AG04449 (cell line): ENCODE measurements at regions of chr17 and their contacts with region 1.

Region 1: GRCh38 chr17:37818689-37819088 is 73.8 kb upstream of the HNF1B start:
- DNase-seq: no peak
- H3K4me3 ChIP-seq: no peak overlapping the region
- CTCF ChIP-seq: no peak

Region 2: DNA sequence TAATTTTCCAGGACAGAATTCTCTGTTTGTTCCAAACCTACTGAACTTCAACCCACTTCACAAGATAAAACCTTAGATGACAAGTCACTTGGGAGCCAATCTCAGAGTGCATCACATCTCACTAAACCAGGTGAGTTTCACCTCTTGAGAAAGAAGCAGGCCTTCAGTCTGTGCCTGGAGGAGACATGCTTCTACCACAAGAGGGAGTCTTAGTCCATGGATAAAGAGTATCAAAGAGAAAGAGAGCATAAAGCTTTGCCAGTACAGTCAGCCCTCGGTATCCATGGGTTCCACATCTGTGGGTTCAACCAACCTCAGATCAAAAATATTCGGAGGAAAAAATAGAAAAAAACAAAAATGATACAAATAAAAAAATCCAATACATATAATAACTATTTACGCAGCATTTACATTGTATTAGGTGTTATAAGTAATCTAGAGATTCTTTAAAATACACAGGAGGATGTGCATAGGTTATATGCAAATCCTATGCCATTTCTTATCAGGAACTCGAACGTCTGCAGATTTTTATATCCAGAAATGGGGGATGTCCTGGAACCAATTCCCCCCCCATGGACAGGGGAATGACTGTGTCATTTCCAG is 291.3 kb before region 1 on chr17:
- CTCF ChIA-PET with region 1: interaction called, 35 read pairs
- POLR2A ChIA-PET with region 1: no interaction called
- DNase-seq: no peak
- H3K4me3 ChIP-seq: no peak overlapping the region
- CTCF ChIP-seq: peak; percentile 67

Region 3: GRCh38 chr17:37643118-37643766 is 175.4 kb before region 1 on chr17 and contains the start of gene DDX52:
- CTCF ChIA-PET with region 1: interaction called, 169 read pairs
- POLR2A ChIA-PET with region 1: no interaction called
- DNase-seq: no peak
- H3K4me3 ChIP-seq: peak within 1 kb of the TSS; percentile 93
- CTCF ChIP-seq: no peak

Region 4: GRCh38 chr17:37661400-37662014 is 157.2 kb before region 1 on chr17:
- CTCF ChIA-PET with region 1: interaction called, 11 read pairs
- POLR2A ChIA-PET with region 1: no interaction called
- DNase-seq: no peak
- H3K4me3 ChIP-seq: no peak overlapping the region
- CTCF ChIP-seq: no peak

Region 5: GRCh38 chr17:37701496-37701898 is 117.2 kb before region 1 on chr17:
- CTCF ChIA-PET with region 1: interaction called, 31 read pairs
- POLR2A ChIA-PET with region 1: no interaction called
- DNase-seq: no peak
- H3K4me3 ChIP-seq: no peak overlapping the region
- CTCF ChIP-seq: peak; percentile 32

Region 6: DNA sequence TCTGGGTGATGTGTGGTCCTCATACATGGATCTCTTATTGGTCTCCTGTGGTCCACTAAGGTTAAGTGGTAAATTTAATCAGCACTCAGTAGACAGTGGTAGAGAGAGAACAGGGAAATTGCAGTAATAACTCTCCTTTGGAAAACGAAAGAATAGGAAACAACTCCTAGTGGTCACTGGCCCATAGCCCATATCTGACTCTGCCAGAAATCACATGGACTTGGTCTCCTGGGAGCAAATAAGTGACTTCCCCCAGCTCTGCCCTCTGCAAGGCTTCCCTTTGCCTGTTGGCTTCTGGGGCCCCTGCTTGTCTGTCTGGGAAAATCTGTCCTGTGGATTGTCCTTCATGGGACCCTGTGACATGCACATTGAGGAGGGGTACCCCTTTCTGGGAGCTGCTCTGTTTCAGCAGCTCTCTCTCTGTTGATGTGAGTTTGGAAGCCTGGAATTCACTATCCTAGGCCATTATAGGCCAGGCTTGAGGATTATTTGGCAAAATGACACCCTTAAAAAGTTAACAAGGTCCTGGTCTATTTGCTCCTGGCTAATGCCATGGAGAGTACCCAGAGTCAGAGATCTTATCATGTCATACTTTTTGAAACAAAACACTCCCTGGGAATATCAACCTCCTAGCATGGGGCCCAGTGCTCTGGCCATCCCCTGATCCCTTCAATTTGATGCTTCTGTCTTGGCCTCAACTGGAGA is 15.8 kb before region 1 on chr17:
- CTCF ChIA-PET with region 1: interaction called, 41 read pairs
- POLR2A ChIA-PET with region 1: no interaction called
- DNase-seq: no peak
- H3K4me3 ChIP-seq: no peak overlapping the region
- CTCF ChIP-seq: no peak

Region 7: DNA sequence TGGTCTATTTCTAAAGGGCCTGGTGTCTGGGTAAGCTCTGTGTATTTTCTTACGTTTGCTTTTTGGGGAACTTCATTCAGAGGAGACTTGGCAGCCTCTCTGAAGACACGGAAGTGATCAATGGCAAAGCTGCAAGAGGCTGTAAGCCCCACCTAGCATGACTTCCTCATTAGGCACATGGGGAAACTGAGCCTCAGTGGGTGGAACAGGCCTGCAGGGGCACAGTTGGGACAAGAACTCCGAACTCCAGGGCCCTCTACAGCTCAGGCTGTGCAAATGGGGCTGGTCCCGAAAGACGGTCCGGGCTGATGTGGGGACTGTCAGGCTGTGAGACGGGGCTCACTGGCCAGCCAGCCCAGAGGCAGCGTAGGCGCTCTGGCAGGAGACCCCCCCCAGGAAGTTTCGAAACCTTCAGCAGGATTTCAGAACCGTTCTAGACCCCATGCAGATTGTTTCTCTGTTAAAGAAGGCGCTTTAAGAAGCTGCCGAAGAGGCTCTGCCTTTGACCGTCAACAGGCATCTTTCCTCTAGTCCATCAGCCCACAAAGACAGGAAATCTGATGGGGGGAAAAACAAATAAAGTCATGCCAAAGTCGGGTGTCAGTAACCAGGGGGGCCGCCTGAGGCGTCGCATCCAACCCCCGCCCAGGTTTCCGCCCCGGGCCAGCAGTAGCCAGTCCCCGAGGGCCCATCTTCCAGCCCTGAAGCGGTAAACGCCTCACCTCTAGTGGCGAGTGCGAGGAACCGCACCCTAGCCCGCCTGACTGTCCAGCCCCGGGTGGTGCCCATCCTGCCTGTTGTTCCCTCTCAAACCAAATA is 25.7 kb after region 1 on chr17:
- CTCF ChIA-PET with region 1: interaction called, 10 read pairs
- POLR2A ChIA-PET with region 1: no interaction called
- DNase-seq: no peak
- H3K4me3 ChIP-seq: no peak overlapping the region; the same call in 1 of the 2 replicates
- CTCF ChIP-seq: peak; percentile 93